K562 (cell line): ENCODE measurements at regions of chr4 and their contacts with region 1.

Region 1: GRCh38 chr4:147866532-147867271 is 134.8 kb downstream of the ARHGAP10 start:
- DNase-seq: peak; percentile 72 to 90 (median 82)
- ATAC-seq: peak; percentile 100
- H3K4me3 ChIP-seq: no peak overlapping the region
- H3K27ac ChIP-seq: no peak overlapping the region
- H3K4me1 ChIP-seq: no peaks in the 10 kb centered on the region
- H3K27me3 ChIP-seq: no peaks in the 10 kb centered on the region
- CTCF ChIP-seq: peak; percentile 98 to 100 (median 100)
- EP300 ChIP-seq: no peak
- POLR2A ChIP-seq: no peak
- RAD21 ChIP-seq: peak; percentile 92

Region 2: DNA sequence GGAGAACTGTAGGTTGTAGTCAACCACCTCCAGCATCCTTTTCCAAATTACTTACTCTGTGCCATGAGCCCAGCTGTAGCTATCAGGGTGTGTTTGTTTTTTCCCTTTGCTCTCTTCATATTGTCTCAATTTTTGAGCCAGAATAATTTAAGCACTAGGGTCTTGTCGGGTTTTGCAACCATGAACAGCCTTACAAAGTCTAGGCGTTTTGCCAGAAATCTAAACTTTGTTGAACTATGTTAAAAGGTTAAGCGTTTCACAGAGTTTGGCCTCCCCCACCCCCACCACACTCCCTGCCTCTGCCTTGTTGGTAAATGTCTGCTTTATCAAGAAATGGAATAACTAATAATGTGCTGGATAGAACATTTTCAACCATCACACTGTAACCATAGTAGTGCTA is 730.4 kb before region 1 on chr4:
- CTCF ChIA-PET with region 1: no interaction called
- POLR2A ChIA-PET with region 1: no interaction called
- in situ Hi-C with region 1: loop called (anchors 25 kb)
- intact Hi-C with region 1: no loop called
- DNase-seq: no peak
- ATAC-seq: no peak
- H3K4me3 ChIP-seq: no peak overlapping the region
- H3K27ac ChIP-seq: no peak overlapping the region
- H3K4me1 ChIP-seq: no peaks in the 10 kb centered on the region
- H3K27me3 ChIP-seq: 0 out of 5 replicates have a peak, but pooled peaks cover 0 to 4% of the 10 kb centered on the region in 2 experiments
- CTCF ChIP-seq: no peak
- EP300 ChIP-seq: no peak
- POLR2A ChIP-seq: no peak
- RAD21 ChIP-seq: no peak

Region 3: GRCh38 chr4:147518846-147519767 is 347.6 kb before region 1 on chr4:
- CTCF ChIA-PET with region 1: interaction called, 22 read pairs
- POLR2A ChIA-PET with region 1: no interaction called
- in situ Hi-C with region 1: no loop called
- intact Hi-C with region 1: loop called (anchors 2 kb)
- DNase-seq: peak; percentile 31 to 55 (median 34)
- ATAC-seq: peak; percentile 88
- H3K4me3 ChIP-seq: no peak overlapping the region
- H3K27ac ChIP-seq: no peak overlapping the region
- H3K4me1 ChIP-seq: no peaks in the 10 kb centered on the region
- H3K27me3 ChIP-seq: no peaks in the 10 kb centered on the region
- CTCF ChIP-seq: peak; percentile 71 to 75 (median 71)
- EP300 ChIP-seq: no peak
- POLR2A ChIP-seq: no peak
- RAD21 ChIP-seq: peak; percentile 23 to 66; a peak in 3 of 4 replicates

Region 4: DNA sequence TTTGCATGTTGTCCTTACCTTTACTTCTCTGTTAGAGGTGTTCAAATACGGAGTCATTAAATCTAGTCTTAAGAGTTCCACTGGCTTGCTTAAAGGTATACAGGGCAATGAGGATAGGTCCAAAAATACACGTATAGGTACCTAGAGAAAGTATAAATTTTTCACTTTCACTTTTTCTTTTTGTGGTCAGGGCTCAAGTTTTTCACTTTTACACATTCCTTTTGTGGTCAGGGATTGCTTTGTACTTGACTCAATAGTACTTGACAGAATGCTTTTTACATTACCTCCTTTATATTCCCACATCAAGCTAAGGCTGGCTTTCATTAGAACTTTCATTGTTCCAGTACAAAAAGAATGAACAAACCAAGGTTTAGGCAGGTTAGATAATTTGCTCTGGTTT is 227.8 kb before region 1 on chr4:
- CTCF ChIA-PET with region 1: no interaction called
- POLR2A ChIA-PET with region 1: no interaction called
- in situ Hi-C with region 1: no loop called
- intact Hi-C with region 1: no loop called
- DNase-seq: no peak
- ATAC-seq: no peak
- H3K4me3 ChIP-seq: no peak overlapping the region
- H3K27ac ChIP-seq: no peak overlapping the region
- H3K4me1 ChIP-seq: no peaks in the 10 kb centered on the region
- H3K27me3 ChIP-seq: no peaks in the 10 kb centered on the region
- CTCF ChIP-seq: no peak
- EP300 ChIP-seq: no peak
- POLR2A ChIP-seq: no peak
- RAD21 ChIP-seq: no peak

Region 5: DNA sequence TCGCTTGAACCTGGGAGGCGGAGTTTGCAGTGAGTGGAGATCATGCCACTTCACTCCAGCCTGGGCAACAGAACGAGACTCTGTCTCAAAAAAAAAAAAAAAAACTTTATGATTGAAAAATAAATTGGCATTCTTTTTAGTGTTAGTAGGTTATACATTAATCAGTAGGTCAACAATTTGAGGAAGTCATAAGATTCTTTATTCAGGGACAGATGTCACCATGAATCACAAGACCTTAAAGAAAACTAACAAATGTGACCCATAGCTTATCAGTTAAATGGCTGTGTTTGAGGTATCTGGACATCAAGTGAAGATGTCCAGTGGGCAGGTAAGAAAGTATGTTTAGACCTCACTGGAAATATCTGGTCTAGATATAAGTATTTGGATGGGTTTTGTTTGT is 173.5 kb before region 1 on chr4:
- CTCF ChIA-PET with region 1: interaction called, 11 read pairs
- POLR2A ChIA-PET with region 1: no interaction called
- in situ Hi-C with region 1: no loop called
- intact Hi-C with region 1: loop called (anchors 2 kb)
- DNase-seq: no peak
- ATAC-seq: no peak
- H3K4me3 ChIP-seq: no peak overlapping the region
- H3K27ac ChIP-seq: no peak overlapping the region
- H3K4me1 ChIP-seq: no peaks in the 10 kb centered on the region
- H3K27me3 ChIP-seq: peaks cover 15 to 17% of the 10 kb centered on the region in 2 experiments; a peak in 4 of 5 replicates
- CTCF ChIP-seq: no peak
- EP300 ChIP-seq: no peak
- POLR2A ChIP-seq: no peak
- RAD21 ChIP-seq: no peak